Activated T-helper 1 cell treated with anti-CD3 and anti-CD28 coated beads, Interleukin-12 subunit alpha, Interleukin-12 subunit beta, Interleukin-2, Interleukin-4 antibody, amounts not matched to agents 30 ng/mL and 10 ng/mL and 1 ng/mL, durations not matched to agents 14 hours and 24 hours and 36 hours (primary cell): ENCODE measurements at regions of chr1 and their contacts with region 1.

Region 1: GRCh38 chr1:41891199-41891896 is 27.4 kb downstream of the HIVEP3 start:
- DNase-seq: peak; percentile 57
- H3K4me3 Mint-ChIP-seq: peak overlapping the region; percentile 82
- H3K27ac Mint-ChIP-seq: peak overlapping the region; percentile 92
- H3K4me1 Mint-ChIP-seq: peaks cover 69% of the 10 kb centered on the region
- H3K27me3 Mint-ChIP-seq: no peaks in the 10 kb centered on the region

Region 2: GRCh38 chr1:41936118-41936517 is 44.8 kb after region 1 on chr1:
- intact Hi-C with region 1: loop called (anchors 5 kb)
- DNase-seq: no peak
- H3K4me3 Mint-ChIP-seq: no peak overlapping the region
- H3K27ac Mint-ChIP-seq: no peak overlapping the region
- H3K4me1 Mint-ChIP-seq: peaks cover 27% of the 10 kb centered on the region
- H3K27me3 Mint-ChIP-seq: peaks cover 19% of the 10 kb centered on the region